H1 (cell line): ENCODE measurements at regions of chr21 and their contacts with region 1.

Region 1: GRCh38 chr21:42845296-42845965 is 33.9 kb downstream of the WDR4 start:
- DNase-seq: no peak
- H3K4me3 ChIP-seq: no peak overlapping the region
- H3K27ac ChIP-seq: no peak overlapping the region
- H3K4me1 ChIP-seq: no peaks in the 10 kb centered on the region
- H3K27me3 ChIP-seq: no peaks in the 10 kb centered on the region; a peak in 1 of 7 replicates
- CTCF ChIP-seq: no peak
- EP300 ChIP-seq: no peak
- POLR2A ChIP-seq: no peak
- RAD21 ChIP-seq: no peak

Region 2: DNA sequence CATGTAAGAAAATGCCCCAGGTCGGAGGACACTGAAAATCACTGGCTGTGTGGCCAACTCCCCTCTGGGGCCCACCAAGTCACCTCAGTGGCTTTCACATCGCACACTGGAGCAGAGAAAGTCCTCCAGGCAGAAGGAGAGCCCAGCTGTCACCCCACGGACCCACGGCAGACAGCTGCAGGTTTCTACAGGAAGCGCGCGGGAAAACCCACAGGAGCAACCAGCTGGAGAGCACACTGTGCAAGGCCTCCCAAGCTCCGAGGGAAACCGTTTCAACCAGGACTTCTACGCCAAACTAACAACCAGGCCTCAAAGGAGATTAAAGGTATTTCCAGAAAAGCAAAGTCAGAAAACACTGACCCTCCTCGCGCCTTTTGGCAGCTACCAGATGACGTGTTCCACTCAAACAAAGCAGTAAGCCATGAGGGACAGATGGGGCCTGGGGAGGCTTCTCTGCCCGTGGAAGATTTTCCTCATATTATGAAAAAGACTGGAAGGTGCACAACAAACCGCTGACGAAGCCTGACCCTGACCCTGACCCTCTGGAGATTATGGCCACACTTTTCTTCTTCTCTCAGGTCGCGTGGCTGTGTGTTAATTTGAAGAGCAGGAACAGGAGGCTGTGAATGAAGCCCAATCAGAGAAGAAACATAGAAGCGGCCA is 12.9 kb after region 1 on chr21:
- CTCF ChIA-PET with region 1: interaction called, 7 read pairs
- POLR2A ChIA-PET with region 1: interaction called, 21 read pairs
- DNase-seq: no peak
- H3K4me3 ChIP-seq: no peak overlapping the region
- H3K27ac ChIP-seq: no peak overlapping the region
- H3K4me1 ChIP-seq: no peaks in the 10 kb centered on the region
- H3K27me3 ChIP-seq: no peaks in the 10 kb centered on the region
- CTCF ChIP-seq: no peak
- EP300 ChIP-seq: no peak
- POLR2A ChIP-seq: no peak
- RAD21 ChIP-seq: no peak